ENCODE measurements at regions of chr15 and their contacts with region 1.

Region 1: DNA sequence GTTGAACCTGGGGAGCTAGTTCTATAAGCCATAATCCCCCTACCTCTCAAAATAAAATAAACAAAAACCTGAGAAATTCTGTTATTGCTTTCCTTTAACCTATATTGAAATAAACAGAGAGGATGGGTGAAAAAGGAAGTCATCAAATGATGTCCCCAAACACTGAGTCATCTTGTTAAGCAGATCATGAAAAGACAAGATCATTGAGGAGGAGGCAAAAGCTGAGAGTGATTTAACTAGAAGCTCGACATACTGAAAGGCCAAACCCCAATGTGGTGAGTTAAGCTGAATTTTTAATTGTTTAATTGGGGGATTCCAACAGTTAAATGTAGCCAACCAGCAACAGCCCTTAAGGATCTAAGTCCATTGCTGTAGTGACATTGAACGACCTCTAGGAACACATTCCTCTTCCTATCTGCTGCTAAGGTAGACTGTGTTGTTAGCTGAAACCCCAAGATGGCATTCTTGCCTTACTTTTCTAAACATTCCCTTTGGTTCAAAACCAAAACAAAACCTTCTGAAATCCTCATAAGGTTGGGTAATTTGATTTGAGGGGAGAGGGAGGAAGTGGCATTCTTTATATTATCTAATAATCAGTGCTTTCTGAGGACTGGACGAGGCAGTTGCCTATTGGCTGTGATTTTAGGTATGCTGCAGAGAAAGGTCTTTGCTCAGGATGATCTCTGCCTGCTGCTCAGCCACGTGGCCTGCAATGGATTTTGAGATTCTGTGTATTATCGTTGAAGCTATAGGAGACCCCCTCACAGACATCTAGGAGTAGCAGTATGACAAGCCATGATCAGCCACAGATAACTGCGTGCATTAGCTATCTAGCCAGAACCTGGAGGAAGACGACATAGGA is 62.7 kb upstream of the BNIP2 start:
- DNase-seq: peak in 7 of 9 donors; percentile 47 to 77 (median 65)
- ATAC-seq: peak; percentile 96
- H3K4me3 ChIP-seq: no peak overlapping the region
- H3K4me3 Mint-ChIP-seq: no peak overlapping the region
- H3K27ac ChIP-seq: no peak overlapping the region
- H3K27ac Mint-ChIP-seq: peak overlapping the region in 6 of 9 donors; percentile 0 to 26 (median 6)
- H3K4me1 ChIP-seq: peaks cover 0 to 9% of the 10 kb centered on the region in 2 donors
- H3K4me1 Mint-ChIP-seq: peaks cover 4 to 18% (median 17%) of the 10 kb centered on the region in 7 donors
- H3K27me3 ChIP-seq: no peaks in the 10 kb centered on the region
- H3K27me3 Mint-ChIP-seq: peaks cover 0 to 23% (median 4%) of the 10 kb centered on the region in 5 donors

Region 2: DNA sequence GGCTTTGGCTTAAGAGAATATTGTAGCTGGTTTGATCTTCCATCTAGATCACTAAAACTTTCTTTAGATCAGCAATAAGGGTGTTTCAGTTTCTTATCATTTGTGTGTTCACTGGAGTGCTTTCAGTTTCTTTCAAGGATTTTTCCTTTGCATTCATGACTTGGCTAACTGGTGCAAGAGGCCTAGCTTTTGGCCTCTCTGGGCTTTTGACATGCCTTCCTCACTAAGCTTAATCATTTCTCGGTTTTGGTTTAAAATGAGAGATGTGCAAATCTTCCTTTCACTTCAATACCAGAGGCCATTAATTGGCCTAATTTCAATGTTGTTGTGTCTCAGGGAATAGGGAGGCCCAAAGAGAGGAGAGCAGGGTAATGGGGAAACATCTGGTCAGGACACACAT is 677.2 kb before region 1 on chr15:
- CTCF ChIA-PET with region 1: no interaction called
- POLR2A ChIA-PET with region 1: no interaction called
- intact Hi-C with region 1: no loop called
- DNase-seq: no peak
- ATAC-seq: no peak
- H3K4me3 ChIP-seq: no peak overlapping the region
- H3K4me3 Mint-ChIP-seq: peak overlapping the region in 1 of 10 donors; percentile 6
- H3K27ac ChIP-seq: no peak overlapping the region
- H3K27ac Mint-ChIP-seq: peak overlapping the region in 7 of 9 donors; percentile 3 to 82 (median 36)
- H3K4me1 ChIP-seq: no peaks in the 10 kb centered on the region
- H3K4me1 Mint-ChIP-seq: peaks cover 0 to 15% (median 0%) of the 10 kb centered on the region in 7 donors
- H3K27me3 ChIP-seq: no peaks in the 10 kb centered on the region
- H3K27me3 Mint-ChIP-seq: no peaks in the 10 kb centered on the region

Region 3: GRCh38 chr15:59797756-59798604 is 46.2 kb after region 1 on chr15:
- CTCF ChIA-PET with region 1: interaction called, 26 read pairs
- POLR2A ChIA-PET with region 1: interaction called, 9 read pairs
- intact Hi-C with region 1: loop called in 1 of 2 experiments (anchors 1 kb)
- DNase-seq: no peak
- ATAC-seq: no peak
- H3K4me3 ChIP-seq: peak overlapping the region; percentile 4
- H3K4me3 Mint-ChIP-seq: peak overlapping the region; percentile 44 to 75 (median 62)
- H3K27ac ChIP-seq: peak overlapping the region; percentile 70
- H3K27ac Mint-ChIP-seq: peak overlapping the region; percentile 38 to 96 (median 92)
- H3K4me1 ChIP-seq: peaks cover 22 to 72% of the 10 kb centered on the region in 2 donors
- H3K4me1 Mint-ChIP-seq: peaks cover 28 to 97% (median 88%) of the 10 kb centered on the region in 7 donors
- H3K27me3 ChIP-seq: no peaks in the 10 kb centered on the region
- H3K27me3 Mint-ChIP-seq: peaks cover 0 to 27% (median 0%) of the 10 kb centered on the region in 5 donors

Region 4: DNA sequence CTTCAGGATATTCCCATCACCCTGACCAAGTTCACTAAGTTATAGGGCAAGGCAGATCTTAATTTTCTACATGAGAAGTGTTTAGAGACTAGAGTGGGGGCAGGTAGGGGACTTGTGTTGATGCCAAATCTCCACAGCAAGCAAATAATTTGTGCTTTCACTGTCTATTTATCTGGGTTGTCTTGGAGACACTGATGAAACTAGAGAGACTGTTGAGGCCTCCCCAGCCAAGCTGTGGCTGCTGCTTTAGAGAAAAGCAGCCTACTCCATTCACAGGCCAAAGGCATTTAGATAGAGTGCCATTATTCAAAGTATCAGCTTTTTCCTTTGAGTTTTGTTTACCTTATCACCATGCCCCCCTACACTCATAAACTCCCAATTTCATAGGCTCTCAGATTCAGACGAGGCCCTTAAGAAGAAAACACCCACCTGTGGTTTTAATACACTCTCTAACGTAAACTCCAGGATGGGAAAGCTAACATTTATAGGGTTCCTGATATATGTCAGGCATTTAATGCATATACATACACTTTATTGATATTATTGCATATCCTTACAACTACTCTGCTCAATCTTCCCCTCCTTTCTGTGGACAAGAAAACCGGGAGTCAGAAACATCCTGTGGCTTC is 122.0 kb after region 1 on chr15:
- CTCF ChIA-PET with region 1: no interaction called
- POLR2A ChIA-PET with region 1: no interaction called
- intact Hi-C with region 1: loop called in 1 of 2 experiments (anchors 5 kb)
- DNase-seq: no peak
- ATAC-seq: no peak
- H3K4me3 ChIP-seq: no peak overlapping the region
- H3K4me3 Mint-ChIP-seq: no peak overlapping the region
- H3K27ac ChIP-seq: no peak overlapping the region
- H3K27ac Mint-ChIP-seq: no peak overlapping the region
- H3K4me1 ChIP-seq: no peaks in the 10 kb centered on the region
- H3K4me1 Mint-ChIP-seq: peaks cover 0 to 3% (median 0%) of the 10 kb centered on the region in 7 donors
- H3K27me3 ChIP-seq: no peaks in the 10 kb centered on the region
- H3K27me3 Mint-ChIP-seq: peaks cover 0 to 49% (median 5%) of the 10 kb centered on the region in 5 donors

Region 5: DNA sequence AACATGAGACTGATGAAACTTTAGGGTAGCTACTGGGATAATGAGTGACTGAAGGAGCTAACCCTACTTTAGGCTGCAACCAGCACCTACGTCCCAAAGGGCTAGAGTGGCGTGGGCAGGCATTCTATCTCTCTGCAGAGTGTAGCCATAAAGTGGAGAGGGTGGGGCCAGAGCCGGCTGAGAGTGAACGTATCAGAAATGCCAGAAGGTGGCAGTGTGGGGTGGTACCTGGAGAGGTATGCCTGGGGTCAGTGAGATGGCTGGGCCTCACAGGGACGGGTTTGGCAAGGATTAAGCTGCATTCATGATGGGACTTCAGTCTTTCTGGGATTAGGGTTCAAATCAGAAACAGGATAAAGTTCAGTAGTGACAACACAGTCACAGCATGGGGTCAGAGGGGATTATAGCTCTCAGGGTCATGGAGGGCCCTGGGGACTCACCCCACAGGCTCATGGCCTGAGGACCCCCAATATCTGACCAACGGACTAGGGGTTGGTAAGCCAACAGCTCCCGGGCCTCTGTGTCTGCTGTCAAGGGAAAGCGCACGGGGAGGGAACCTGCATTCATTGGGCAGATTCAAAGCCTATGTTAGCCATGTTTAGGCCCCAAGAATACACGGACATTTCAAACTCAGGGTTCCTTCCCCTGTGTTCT is 165.8 kb after region 1 on chr15:
- CTCF ChIA-PET with region 1: interaction called, 68 read pairs
- POLR2A ChIA-PET with region 1: interaction called, 3 read pairs
- intact Hi-C with region 1: loop called (anchors 1 to 5 kb)
- DNase-seq: peak; percentile 31 to 67 (median 54)
- ATAC-seq: peak; percentile 90
- H3K4me3 ChIP-seq: no peak overlapping the region
- H3K4me3 Mint-ChIP-seq: peak overlapping the region in 1 of 10 donors; percentile 33
- H3K27ac ChIP-seq: no peak overlapping the region
- H3K27ac Mint-ChIP-seq: peak overlapping the region in 4 of 9 donors; percentile 31 to 51 (median 37)
- H3K4me1 ChIP-seq: peaks cover 0 to 11% of the 10 kb centered on the region in 2 donors
- H3K4me1 Mint-ChIP-seq: peaks cover 6 to 29% (median 25%) of the 10 kb centered on the region in 7 donors
- H3K27me3 ChIP-seq: peaks cover 0 to 5% of the 10 kb centered on the region in 2 donors
- H3K27me3 Mint-ChIP-seq: peaks cover 0 to 30% (median 8%) of the 10 kb centered on the region in 5 donors

Region 6: GRCh38 chr15:59997070-59997701 is 245.4 kb after region 1 on chr15:
- CTCF ChIA-PET with region 1: no interaction called
- POLR2A ChIA-PET with region 1: interaction called, 3 read pairs
- intact Hi-C with region 1: loop called (anchors 5 kb)
- DNase-seq: peak in 5 of 9 donors; percentile 34 to 74 (median 51)
- ATAC-seq: peak; percentile 70
- H3K4me3 ChIP-seq: no peak overlapping the region
- H3K4me3 Mint-ChIP-seq: peak overlapping the region; percentile 32 to 82 (median 48)
- H3K27ac ChIP-seq: no peak overlapping the region
- H3K27ac Mint-ChIP-seq: peak overlapping the region in 2 of 9 donors; percentile 10 to 69
- H3K4me1 ChIP-seq: peaks cover 7 to 19% of the 10 kb centered on the region in 2 donors
- H3K4me1 Mint-ChIP-seq: peaks cover 24 to 73% (median 48%) of the 10 kb centered on the region in 7 donors
- H3K27me3 ChIP-seq: peaks cover 41 to 85% of the 10 kb centered on the region in 2 donors
- H3K27me3 Mint-ChIP-seq: peaks cover 87 to 98% (median 93%) of the 10 kb centered on the region in 5 donors

Region 7: DNA sequence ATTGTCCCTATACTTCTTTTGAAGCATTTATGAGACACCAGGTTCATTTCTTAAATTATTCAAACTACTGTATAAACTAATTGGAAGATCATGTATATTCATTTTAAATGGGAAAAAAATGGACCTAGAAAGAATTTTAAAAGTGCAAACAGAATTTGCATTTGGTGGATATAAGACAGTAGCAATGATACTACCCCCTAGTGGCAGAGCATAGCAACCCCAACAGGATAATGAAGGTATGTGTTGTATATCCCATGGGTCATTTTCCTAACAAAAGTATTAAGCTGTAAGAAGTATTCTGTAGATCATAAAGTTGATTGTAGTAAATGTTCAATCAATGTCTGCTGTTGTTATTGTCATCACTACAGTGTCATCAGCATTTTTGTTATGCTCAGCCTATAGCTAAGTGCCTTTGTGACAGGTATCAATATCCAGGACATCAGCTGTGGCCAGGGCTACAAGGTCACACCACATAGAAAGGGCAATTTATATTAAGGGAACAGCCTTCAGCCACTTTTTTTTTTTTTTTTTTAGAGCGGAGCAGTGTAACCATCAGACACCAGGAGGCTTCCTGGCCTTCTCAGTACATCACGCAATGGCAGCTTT is 428.1 kb after region 1 on chr15:
- CTCF ChIA-PET with region 1: interaction called, 68 read pairs
- POLR2A ChIA-PET with region 1: interaction called, 10 read pairs
- intact Hi-C with region 1: loop called (anchors 1 to 2 kb)
- DNase-seq: peak in 7 of 9 donors; percentile 19 to 52 (median 41)
- ATAC-seq: peak; percentile 73
- H3K4me3 ChIP-seq: no peak overlapping the region
- H3K4me3 Mint-ChIP-seq: no peak overlapping the region
- H3K27ac ChIP-seq: no peak overlapping the region
- H3K27ac Mint-ChIP-seq: no peak overlapping the region
- H3K4me1 ChIP-seq: no peaks in the 10 kb centered on the region
- H3K4me1 Mint-ChIP-seq: no peaks in the 10 kb centered on the region
- H3K27me3 ChIP-seq: no peaks in the 10 kb centered on the region
- H3K27me3 Mint-ChIP-seq: peaks cover 2 to 49% (median 9%) of the 10 kb centered on the region in 5 donors

Region 8: GRCh38 chr15:60326824-60327654 is 575.3 kb after region 1 on chr15:
- CTCF ChIA-PET with region 1: interaction called, 16 read pairs
- POLR2A ChIA-PET with region 1: no interaction called
- intact Hi-C with region 1: loop called (anchors 1 to 2 kb)
- DNase-seq: peak in 7 of 9 donors; percentile 24 to 62 (median 56)
- ATAC-seq: peak; percentile 60
- H3K4me3 ChIP-seq: no peak overlapping the region
- H3K4me3 Mint-ChIP-seq: no peak overlapping the region
- H3K27ac ChIP-seq: no peak overlapping the region
- H3K27ac Mint-ChIP-seq: peak overlapping the region in 1 of 9 donors; percentile 2
- H3K4me1 ChIP-seq: no peaks in the 10 kb centered on the region
- H3K4me1 Mint-ChIP-seq: peaks cover 0 to 14% (median 4%) of the 10 kb centered on the region in 7 donors
- H3K27me3 ChIP-seq: peaks cover 0 to 10% of the 10 kb centered on the region in 2 donors
- H3K27me3 Mint-ChIP-seq: peaks cover 19 to 71% (median 35%) of the 10 kb centered on the region in 5 donors